Activated CD4-positive, alpha-beta T cell treated with anti-CD3 and anti-CD28 coated beads, Interleukin-2, amount 10 ng/mL, durations not matched to agents 24 days and 14 days (primary cell): ENCODE measurements at regions of chr11 and their contacts with region 1.

Region 1: DNA sequence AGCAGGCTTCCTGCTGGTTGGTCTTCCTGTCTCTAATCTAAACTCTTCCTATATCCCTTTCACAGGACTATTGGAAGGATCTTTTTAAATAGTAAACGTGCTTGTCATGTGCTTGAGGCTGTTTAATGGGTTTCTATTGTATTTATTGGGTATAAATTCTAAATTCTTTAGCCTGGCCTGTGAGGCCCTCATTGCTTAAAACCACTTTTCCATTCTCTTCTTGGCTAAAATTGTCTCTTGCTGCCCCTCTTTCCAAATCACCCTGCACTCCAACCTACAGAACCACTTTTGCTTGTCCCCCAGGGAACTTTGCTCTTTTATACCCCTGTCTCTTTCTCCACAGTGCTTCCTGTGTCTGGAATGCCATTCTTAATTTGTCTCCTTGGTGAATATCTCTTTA is 46.4 kb upstream of the MUC15 start:
- DNase-seq: no peak
- H3K4me3 Mint-ChIP-seq: no peak overlapping the region
- H3K27ac Mint-ChIP-seq: no peak overlapping the region
- H3K4me1 Mint-ChIP-seq: no peaks in the 10 kb centered on the region
- H3K27me3 Mint-ChIP-seq: no peaks in the 10 kb centered on the region

Region 2: GRCh38 chr11:26974069-26974783 is 355.8 kb after region 1 on chr11:
- intact Hi-C with region 1: loop called (anchors 5 kb)
- DNase-seq: no peak
- H3K4me3 Mint-ChIP-seq: no peak overlapping the region
- H3K27ac Mint-ChIP-seq: no peak overlapping the region
- H3K4me1 Mint-ChIP-seq: no peaks in the 10 kb centered on the region
- H3K27me3 Mint-ChIP-seq: no peaks in the 10 kb centered on the region